ENCODE measurements at regions of chr20 and their contacts with region 1.

Region 1: DNA sequence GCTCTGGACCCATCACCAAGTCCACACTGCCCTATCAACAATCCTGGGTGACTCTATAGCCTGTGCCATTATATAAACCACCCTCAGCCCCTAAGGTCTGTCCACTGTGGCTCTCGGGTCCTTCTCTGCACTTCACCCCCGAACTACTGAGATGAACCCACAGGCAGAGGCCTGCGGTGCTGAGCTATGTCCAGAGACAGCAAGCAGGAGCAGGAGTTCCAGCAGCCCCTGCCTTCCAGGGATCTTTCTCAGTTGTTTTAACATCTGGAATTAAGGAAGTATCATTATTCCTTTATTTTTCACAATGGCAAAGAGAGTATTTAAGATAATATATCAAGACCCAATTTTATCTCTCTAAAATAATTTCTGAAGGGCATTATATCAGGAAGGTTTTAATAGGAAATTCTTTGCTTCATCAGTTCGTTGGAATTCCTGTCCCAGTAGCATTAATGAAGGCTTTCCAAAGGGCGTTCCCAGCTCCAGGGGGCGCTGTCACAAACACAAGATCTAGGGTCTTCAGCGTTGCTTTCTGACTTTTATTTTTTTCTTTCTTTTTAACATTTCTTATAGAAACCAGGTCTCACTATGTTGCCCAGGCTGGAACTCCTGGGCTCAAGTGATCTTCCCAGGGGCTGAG is 27.3 kb downstream of the RRBP1 start:
- DNase-seq: no peak
- ATAC-seq: no peak
- H3K4me3 ChIP-seq: no peak overlapping the region
- H3K27ac ChIP-seq: no peak overlapping the region
- H3K4me1 ChIP-seq: peaks cover 37% of the 10 kb centered on the region
- H3K27me3 ChIP-seq: no peaks in the 10 kb centered on the region
- CTCF ChIP-seq: peak; percentile 63

Region 2: DNA sequence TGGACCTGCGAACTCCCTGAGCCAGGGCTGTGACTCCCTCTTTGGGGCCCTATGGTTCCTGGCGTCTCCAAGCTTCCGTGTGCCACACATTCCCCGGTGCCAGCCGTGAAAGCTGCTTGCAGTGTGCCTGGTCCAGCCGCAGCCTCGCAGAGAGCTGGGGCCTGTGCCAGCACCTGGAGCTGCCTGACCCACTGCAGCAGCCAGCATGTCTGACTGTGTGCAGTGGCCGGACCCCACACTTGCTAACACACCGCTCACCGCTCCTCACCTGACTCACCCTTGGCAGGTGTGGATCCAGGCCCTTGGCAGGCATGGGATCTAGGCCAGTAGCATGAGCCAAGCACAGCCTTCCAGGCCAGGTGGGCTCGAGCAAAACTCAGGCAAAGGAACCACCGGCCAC is 679.1 kb before region 1 on chr20:
- intact Hi-C with region 1: no loop called
- DNase-seq: peak; percentile 44
- ATAC-seq: peak in 1 of 2 donors; percentile 11
- H3K4me3 ChIP-seq: no peak overlapping the region
- H3K27ac ChIP-seq: no peak overlapping the region
- H3K4me1 ChIP-seq: no peaks in the 10 kb centered on the region
- H3K27me3 ChIP-seq: no peaks in the 10 kb centered on the region
- CTCF ChIP-seq: no peak

Region 3: GRCh38 chr20:17898548-17898994 is 243.8 kb after region 1 on chr20:
- intact Hi-C with region 1: loop called (anchors 10 kb)
- DNase-seq: peak; percentile 70
- ATAC-seq: peak; percentile 73 to 76
- H3K4me3 ChIP-seq: no peak overlapping the region
- H3K27ac ChIP-seq: no peak overlapping the region
- H3K4me1 ChIP-seq: peaks cover 29% of the 10 kb centered on the region
- H3K27me3 ChIP-seq: no peaks in the 10 kb centered on the region
- CTCF ChIP-seq: peak; percentile 97

Measured in lower lobe of right lung (tissue), 2 donors.